HEK293 (cell line): ENCODE measurements at regions of chr17 and their contacts with region 1.

Region 1: DNA sequence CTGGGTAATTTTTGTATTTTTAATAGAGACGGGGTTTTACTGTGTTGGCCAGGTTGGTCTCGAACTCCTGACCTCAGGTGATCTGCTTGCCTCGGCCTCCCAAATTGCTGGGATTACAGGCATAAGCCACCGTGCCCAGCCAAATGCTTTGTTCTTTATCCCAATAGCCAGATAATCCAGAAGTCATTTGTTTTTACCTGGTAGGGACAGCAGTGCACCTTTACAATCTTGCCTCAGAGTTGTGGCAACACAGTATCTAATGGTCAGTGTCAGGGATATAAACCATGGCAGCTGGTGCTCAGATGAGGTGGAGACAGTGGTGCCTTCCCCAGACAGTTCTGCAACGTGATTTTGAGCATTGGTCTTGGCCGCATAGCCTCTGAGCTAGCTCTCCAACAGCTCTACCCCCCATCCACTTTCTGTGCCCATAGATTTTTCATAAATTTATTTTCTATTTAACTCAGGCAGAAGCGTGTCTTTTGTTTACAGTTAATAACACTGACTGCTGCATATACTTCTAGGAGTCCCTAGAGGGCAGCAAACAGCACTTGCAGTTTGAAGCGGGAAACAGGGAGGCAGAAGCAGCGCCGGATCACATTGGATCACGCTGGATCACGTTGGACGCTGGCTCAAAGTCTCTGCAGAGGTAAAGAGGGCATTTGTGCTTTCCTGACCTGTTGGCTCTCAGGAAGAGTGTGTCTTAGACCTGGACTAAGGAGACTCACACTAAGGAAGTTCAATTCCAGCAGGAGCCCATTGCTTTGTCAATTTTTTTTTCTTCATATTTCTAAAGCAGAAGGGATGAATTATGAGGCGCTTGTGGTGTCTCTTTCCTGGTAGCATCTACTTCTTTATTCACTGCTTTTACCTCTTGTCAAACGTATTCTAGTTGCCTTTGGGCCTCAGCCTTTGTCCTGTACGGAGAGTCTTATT is 5.1 kb upstream of the GGT6 start:
- H3K4me3 ChIP-seq: no peak overlapping the region
- H3K27ac ChIP-seq: peak overlapping the region; percentile 5; the same call in 1 of the 2 replicates
- H3K4me1 ChIP-seq: no peaks in the 10 kb centered on the region
- CTCF ChIP-seq: peak; percentile 52; the same call in 1 of the 2 replicates

Region 2: DNA sequence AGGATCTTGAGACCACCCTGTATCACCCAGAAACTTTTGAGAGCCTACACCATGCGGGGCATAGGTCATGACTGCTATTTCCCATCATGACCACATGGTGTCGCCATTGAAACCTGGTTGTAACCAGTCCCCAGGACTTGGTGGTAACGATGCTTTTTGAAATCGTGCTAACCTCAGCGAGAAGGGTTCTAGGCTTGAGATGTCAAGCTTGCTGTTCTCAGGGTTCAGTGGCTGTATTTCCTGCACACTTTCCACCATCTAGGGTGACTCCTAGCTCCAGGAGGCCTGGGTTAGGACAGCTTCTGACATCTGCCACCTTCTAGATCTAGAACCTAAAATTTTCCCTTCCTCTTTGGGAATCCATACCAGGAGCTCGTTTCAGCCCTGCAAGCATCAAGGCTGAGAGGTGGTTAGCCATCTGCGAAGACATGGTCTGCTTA is 144.8 kb before region 1 on chr17:
- CTCF ChIA-PET with region 1: interaction called, 23 read pairs
- POLR2A ChIA-PET with region 1: no interaction called
- H3K4me3 ChIP-seq: no peak overlapping the region
- H3K27ac ChIP-seq: no peak overlapping the region
- H3K4me1 ChIP-seq: no peaks in the 10 kb centered on the region
- CTCF ChIP-seq: peak; percentile 67

Region 3: GRCh38 chr17:4576729-4577322 is 11.4 kb after region 1 on chr17:
- CTCF ChIA-PET with region 1: interaction called, 23 read pairs
- POLR2A ChIA-PET with region 1: interaction called, 3 read pairs
- H3K4me3 ChIP-seq: no peak overlapping the region
- H3K27ac ChIP-seq: no peak overlapping the region
- H3K4me1 ChIP-seq: 0 out of 2 replicates have a peak, but pooled peaks cover 4% of the 10 kb centered on the region
- CTCF ChIP-seq: no peak

Region 4: DNA sequence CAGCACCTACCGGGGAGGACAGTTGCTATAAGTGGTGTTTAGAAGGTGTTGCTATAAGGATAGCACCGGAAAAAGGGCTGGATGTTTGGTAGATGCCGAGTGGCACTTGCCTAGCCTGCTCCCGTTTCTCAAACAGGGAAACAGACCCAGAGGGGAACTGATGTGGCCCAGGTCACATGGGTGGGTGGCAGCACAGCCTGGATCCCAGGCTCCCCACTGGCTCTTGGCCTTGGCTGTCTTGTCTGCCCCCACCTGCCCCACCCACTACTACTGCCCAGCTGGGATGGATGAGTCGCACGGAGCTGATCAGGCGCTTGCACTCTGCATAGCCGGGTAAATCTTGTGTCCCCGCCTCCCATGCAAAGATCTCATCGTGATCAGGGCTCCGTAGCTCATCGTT is 26.1 kb after region 1 on chr17:
- CTCF ChIA-PET with region 1: interaction called, 58 read pairs
- POLR2A ChIA-PET with region 1: interaction called, 3 read pairs
- H3K4me3 ChIP-seq: no peak overlapping the region
- H3K27ac ChIP-seq: no peak overlapping the region
- H3K4me1 ChIP-seq: no peaks in the 10 kb centered on the region
- CTCF ChIP-seq: no peak

Region 5: DNA sequence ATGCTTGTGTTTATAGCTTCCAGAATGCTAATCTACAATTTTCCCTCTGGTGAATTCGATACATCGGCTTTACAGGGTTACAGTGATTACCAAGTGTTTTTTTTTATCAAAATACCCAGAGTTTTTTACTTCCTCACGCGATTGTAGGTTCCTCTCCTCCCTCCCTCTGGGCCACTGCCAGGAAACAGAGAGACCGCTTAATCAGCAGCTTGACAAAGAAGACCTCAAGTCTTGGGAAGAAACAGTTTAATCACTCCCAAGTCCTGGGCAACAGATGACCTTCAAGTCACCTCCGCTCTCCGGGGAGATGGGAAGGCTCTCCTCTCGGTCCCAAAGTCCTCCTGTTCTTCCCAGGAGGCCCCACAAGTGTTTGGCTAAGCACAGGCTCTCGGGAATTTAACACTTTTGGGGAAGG is 42.3 kb after region 1 on chr17:
- CTCF ChIA-PET with region 1: interaction called, 34 read pairs
- POLR2A ChIA-PET with region 1: no interaction called
- H3K4me3 ChIP-seq: no peak overlapping the region
- H3K27ac ChIP-seq: peak overlapping the region; percentile 57
- H3K4me1 ChIP-seq: peaks cover 24% of the 10 kb centered on the region
- CTCF ChIP-seq: no peak

Region 6: GRCh38 chr17:4625181-4625617 is 59.7 kb after region 1 on chr17:
- CTCF ChIA-PET with region 1: interaction called, 289 read pairs
- POLR2A ChIA-PET with region 1: interaction called, 12 read pairs
- H3K4me3 ChIP-seq: no peak overlapping the region
- H3K27ac ChIP-seq: no peak overlapping the region
- H3K4me1 ChIP-seq: no peaks in the 10 kb centered on the region; the same call in 1 of the 2 replicates
- CTCF ChIP-seq: no peak

Region 7: DNA sequence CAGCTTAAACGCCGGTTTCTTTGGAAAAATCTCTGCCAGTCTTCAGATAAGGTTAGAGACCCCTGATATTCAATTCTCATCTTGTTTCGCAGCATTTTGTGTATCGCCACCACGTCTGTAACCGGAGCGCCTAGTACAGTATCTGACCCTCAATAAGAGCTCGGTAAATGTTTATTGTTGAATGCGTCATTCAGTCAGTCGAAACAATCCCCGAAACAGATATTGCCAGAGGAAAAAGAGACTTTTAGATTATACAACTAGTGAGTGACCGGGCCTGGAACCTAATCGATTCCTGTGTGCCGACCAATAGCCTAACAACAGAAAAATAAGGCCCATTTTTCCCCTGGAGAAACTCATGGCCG is 137.8 kb after region 1 on chr17:
- CTCF ChIA-PET with region 1: interaction called, 18 read pairs
- POLR2A ChIA-PET with region 1: interaction called, 5 read pairs
- H3K4me3 ChIP-seq: peak overlapping the region; percentile 78
- H3K27ac ChIP-seq: peak overlapping the region; percentile 58
- H3K4me1 ChIP-seq: peaks cover 12% of the 10 kb centered on the region
- CTCF ChIP-seq: no peak